Activated T-helper 2 cell treated with anti-CD3 and anti-CD28 coated beads, Interferon-gamma antibody, Interleukin-2, Interleukin-4, amounts not matched to agents 10 μg/mL and 5 μg/mL and 100 μg/mL, durations not matched to agents 14 hours and 24 hours and 36 hours (primary cell): ENCODE measurements at regions of chr17 and their contacts with region 1.

Region 1: GRCh38 chr17:81871387-81872230 is 472 bp upstream of the ARHGDIA start:
- DNase-seq: peak; percentile 94
- H3K4me3 Mint-ChIP-seq: peak overlapping the region; percentile 82
- H3K27ac Mint-ChIP-seq: peak overlapping the region; percentile 91
- H3K4me1 Mint-ChIP-seq: peaks cover 16% of the 10 kb centered on the region
- H3K27me3 Mint-ChIP-seq: no peaks in the 10 kb centered on the region

Region 2: DNA sequence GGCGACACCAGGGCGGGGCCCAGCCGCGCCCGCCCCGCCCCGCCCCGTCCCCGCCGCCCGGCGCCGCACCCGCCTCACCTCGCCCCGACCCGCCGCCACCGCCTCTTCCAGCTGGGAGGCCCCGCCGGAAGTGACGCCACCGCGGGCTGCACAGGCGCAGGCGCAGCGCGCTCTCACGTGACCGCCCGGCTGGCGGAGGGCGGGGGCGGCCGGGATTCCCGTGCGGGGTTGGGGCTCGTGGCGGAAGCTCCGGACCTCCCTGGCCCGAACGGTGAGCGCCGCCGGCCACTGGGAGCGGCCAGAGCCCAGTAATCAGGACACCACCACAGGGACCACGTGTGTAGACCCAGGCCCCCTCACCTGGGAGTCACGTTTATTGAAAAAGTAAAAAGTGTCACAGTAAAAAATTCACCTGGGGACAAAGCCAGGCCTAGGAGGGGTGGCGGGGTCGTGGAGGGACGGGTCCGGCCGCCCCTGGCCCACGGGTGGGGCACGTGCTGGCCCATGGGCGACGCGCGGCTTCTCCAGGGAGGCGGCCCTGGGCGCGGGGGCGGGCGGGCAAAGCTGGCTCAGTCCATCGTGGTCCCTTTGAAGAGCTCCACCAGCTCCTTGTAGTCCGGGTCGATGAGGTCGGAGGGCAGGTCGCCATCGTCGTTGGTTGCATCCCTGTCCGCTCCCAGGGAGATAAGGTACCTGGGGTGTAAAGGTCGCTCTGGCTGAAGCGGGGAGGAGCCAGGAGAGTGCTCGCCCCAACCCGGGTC is 38.3 kb before region 1 on chr17 and contains the start of gene MCRIP1:
- intact Hi-C with region 1: loop called (anchors 5 kb)
- DNase-seq: peak; percentile 94
- H3K4me3 Mint-ChIP-seq: peak within 1 kb of the TSS; percentile 90
- H3K27ac Mint-ChIP-seq: peak within 1 kb of the TSS; percentile 90
- H3K4me1 Mint-ChIP-seq: peaks cover 17% of the 10 kb centered on the region
- H3K27me3 Mint-ChIP-seq: no peaks in the 10 kb centered on the region
- total RNA-seq, gene MCRIP1: 42.5 and 42.9 TPM in 2 replicates

Region 3: GRCh38 chr17:81890447-81891299 is 19.1 kb after region 1 on chr17:
- intact Hi-C with region 1: loop called (anchors 2 kb)
- DNase-seq: no peak
- H3K4me3 Mint-ChIP-seq: peak overlapping the region; percentile 88
- H3K27ac Mint-ChIP-seq: peak overlapping the region; percentile 92
- H3K4me1 Mint-ChIP-seq: peaks cover 18% of the 10 kb centered on the region
- H3K27me3 Mint-ChIP-seq: no peaks in the 10 kb centered on the region